Calu3 (cell line): ENCODE measurements at regions of chr2 and their contacts with region 1.

Region 1: GRCh38 chr2:20755132-20755800 is 67.6 kb downstream of the LDAH start:
- DNase-seq: no peak
- H3K4me3 Mint-ChIP-seq: no peak overlapping the region
- H3K27ac Mint-ChIP-seq: no peak overlapping the region
- H3K4me1 Mint-ChIP-seq: no peaks in the 10 kb centered on the region
- H3K27me3 Mint-ChIP-seq: no peaks in the 10 kb centered on the region
- CTCF ChIP-seq: no peak

Region 2: DNA sequence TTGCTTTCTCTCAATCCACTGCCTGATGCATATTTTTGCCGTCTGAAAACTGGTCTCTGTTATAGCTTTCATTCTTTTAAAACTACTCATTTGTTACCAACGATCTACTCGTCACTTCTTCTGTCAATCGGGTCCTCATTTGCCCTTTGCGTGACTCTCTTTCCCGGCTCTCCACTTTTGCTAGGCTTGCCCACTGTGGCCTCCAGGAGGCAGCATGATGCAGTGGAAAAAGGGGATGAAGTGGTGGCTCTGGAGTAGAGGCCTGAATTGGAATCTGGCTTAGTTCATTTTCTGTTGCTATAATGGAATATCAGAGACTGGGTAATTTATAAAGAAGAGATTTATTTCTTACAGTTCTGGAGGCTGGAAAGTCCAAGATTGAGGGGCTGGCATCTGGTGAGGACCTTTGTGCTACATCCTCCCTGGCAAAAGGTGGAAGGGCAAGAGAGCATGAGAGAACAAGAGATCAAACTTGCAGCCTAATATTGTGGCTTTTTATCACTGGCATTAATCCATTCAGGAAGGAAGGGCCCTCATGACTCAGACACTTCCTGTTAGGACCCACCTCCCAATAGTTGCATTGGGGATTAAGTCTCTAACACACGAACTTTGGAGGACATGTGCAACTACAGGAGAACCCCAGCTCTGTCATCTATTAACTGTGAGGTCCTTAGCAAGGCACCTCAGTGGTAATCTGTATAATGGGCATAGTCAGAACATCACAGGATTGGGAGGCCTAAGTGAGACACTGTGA is 72.9 kb before region 1 on chr2:
- CTCF ChIA-PET with region 1: no interaction called
- intact Hi-C with region 1: loop called (anchors 5 kb)
- DNase-seq: no peak
- H3K4me3 Mint-ChIP-seq: no peak overlapping the region
- H3K27ac Mint-ChIP-seq: no peak overlapping the region
- H3K4me1 Mint-ChIP-seq: no peaks in the 10 kb centered on the region
- H3K27me3 Mint-ChIP-seq: no peaks in the 10 kb centered on the region
- CTCF ChIP-seq: peak; percentile 34

Region 3: GRCh38 chr2:20953145-20953824 is 198.0 kb after region 1 on chr2:
- CTCF ChIA-PET with region 1: no interaction called
- intact Hi-C with region 1: no loop called
- DNase-seq: peak; percentile 13
- H3K4me3 Mint-ChIP-seq: no peak overlapping the region
- H3K27ac Mint-ChIP-seq: no peak overlapping the region
- H3K4me1 Mint-ChIP-seq: no peaks in the 10 kb centered on the region
- H3K27me3 Mint-ChIP-seq: peaks cover 39% of the 10 kb centered on the region
- CTCF ChIP-seq: no peak